Activated CD8-positive, alpha-beta T cell treated with anti-CD3 and anti-CD28 coated beads for 36 hours (primary cell): ENCODE measurements at regions of chr4 and their contacts with region 1.

Region 1: DNA sequence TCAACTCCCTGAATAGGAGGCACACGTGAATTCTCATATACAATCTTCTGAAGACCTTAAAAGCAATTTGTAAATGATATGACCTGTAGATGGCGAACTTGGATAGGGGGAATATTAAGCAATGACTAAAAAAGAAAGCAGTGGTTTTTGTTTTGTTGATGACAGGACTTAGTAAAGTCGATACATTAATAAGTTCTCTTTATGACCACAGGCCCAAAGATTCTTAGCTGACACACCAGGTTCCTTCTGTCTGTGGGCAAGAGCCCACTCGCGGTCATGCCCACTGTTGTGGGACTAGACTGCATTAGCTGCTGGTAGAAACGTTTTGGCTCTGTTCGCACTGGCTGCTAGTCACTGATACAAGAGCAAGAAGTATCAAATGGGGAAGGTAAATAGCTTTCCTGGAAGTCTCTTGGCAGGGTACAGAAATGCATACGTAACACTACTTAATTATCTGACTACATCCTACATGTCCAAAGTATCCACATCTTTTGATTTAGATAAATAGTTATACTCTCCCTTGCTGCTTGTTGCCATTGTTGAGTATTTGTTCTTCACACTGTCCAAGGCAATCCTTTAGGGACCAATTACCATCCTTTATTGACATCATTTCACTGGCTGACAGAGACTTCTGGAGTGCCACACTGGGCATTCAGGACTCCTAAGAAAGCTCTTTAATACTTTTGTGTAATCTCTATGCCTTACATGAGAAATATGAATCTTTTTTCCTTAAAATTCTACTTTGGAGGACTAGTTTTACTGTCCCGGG is 31.0 kb downstream of the ALPK1 start:
- DNase-seq: peak; percentile 21
- ATAC-seq: peak; percentile 55
- H3K4me3 Mint-ChIP-seq: no peak overlapping the region
- H3K27ac Mint-ChIP-seq: no peak overlapping the region
- H3K4me1 Mint-ChIP-seq: no peaks in the 10 kb centered on the region
- H3K27me3 Mint-ChIP-seq: no peaks in the 10 kb centered on the region
- CTCF ChIP-seq: peak; percentile 49

Region 2: GRCh38 chr4:112127803-112128202 is 200.3 kb before region 1 on chr4:
- CTCF ChIA-PET with region 1: no interaction called
- POLR2A ChIA-PET with region 1: no interaction called
- intact Hi-C with region 1: no loop called
- DNase-seq: no peak
- ATAC-seq: peak; percentile 62
- H3K4me3 Mint-ChIP-seq: no peak overlapping the region
- H3K27ac Mint-ChIP-seq: no peak overlapping the region
- H3K4me1 Mint-ChIP-seq: peaks cover 9% of the 10 kb centered on the region
- H3K27me3 Mint-ChIP-seq: peaks cover 10% of the 10 kb centered on the region
- CTCF ChIP-seq: no peak

Region 3: GRCh38 chr4:112515304-112516067 is 187.3 kb after region 1 on chr4:
- CTCF ChIA-PET with region 1: interaction called, 14 read pairs
- POLR2A ChIA-PET with region 1: no interaction called
- intact Hi-C with region 1: no loop called
- DNase-seq: peak; percentile 68
- ATAC-seq: peak; percentile 75
- H3K4me3 Mint-ChIP-seq: peak overlapping the region; percentile 96
- H3K27ac Mint-ChIP-seq: peak overlapping the region; percentile 62
- H3K4me1 Mint-ChIP-seq: peaks cover 46% of the 10 kb centered on the region
- H3K27me3 Mint-ChIP-seq: peaks cover 83% of the 10 kb centered on the region
- CTCF ChIP-seq: no peak

Region 4: DNA sequence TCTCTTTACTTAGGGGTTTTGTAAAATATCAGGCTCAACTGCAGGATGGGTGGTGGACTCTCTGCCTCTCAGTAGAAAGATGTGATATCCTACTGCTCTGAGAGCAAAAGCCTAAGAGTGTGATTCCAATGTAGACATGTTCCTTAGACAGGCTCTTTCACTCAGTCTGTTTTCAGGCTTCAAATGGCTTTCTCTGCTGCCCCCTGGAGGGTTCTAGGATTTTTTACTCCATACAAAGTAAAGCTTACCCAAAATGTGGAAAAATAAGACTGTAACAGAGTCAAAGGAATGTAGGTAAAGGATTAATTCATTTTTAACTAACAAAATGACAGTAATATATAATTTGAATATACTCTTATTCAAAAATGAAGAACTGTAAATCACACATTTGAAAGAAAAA is 276.4 kb after region 1 on chr4:
- CTCF ChIA-PET with region 1: interaction called, 3 read pairs
- POLR2A ChIA-PET with region 1: no interaction called
- intact Hi-C with region 1: loop called (anchors 10 kb)
- DNase-seq: peak; percentile 39
- ATAC-seq: peak; percentile 47
- H3K4me3 Mint-ChIP-seq: no peak overlapping the region
- H3K27ac Mint-ChIP-seq: no peak overlapping the region
- H3K4me1 Mint-ChIP-seq: no peaks in the 10 kb centered on the region
- H3K27me3 Mint-ChIP-seq: no peaks in the 10 kb centered on the region
- CTCF ChIP-seq: peak; percentile 65

Region 5: GRCh38 chr4:112751447-112751846 is 423.3 kb after region 1 on chr4:
- CTCF ChIA-PET with region 1: no interaction called
- POLR2A ChIA-PET with region 1: no interaction called
- intact Hi-C with region 1: loop called (anchors 10 kb)
- DNase-seq: no peak
- ATAC-seq: no peak
- H3K4me3 Mint-ChIP-seq: no peak overlapping the region
- H3K27ac Mint-ChIP-seq: no peak overlapping the region
- H3K4me1 Mint-ChIP-seq: no peaks in the 10 kb centered on the region
- H3K27me3 Mint-ChIP-seq: peaks cover 11% of the 10 kb centered on the region
- CTCF ChIP-seq: no peak